ENCODE measurements at regions of chr12 and their contacts with region 1.

Region 1: DNA sequence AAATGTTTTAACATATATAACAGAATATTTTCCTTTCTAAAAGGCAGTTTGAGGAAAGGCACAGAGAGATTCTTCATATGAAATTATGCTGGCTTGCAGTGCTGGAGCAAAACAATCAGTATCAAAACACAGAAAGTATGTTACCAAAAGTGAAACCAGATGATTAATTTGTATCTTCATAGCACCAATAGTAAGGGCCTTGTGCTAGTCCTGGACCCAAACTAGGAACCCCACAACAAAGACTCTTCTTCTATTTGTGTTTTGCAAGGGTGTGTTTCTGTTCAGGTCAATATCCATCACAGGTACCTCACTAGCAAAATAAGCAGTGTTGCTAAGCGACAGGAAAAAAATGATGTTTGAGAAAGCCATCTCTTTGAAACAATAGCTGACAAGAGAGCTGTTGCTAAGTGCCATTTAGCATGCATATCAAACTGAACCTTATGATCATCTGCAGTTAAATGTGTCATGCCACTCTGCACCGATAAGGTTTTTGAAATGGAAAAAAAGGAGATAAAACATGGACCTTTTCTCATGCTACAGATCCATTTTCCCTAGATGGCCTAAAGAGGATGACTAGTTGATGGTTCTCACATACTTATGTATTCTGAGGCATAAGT is 196.2 kb upstream of the ALG10 start:
- DNase-seq: no peak
- ATAC-seq: no peak
- H3K4me3 ChIP-seq: no peak overlapping the region
- H3K4me3 Mint-ChIP-seq: no peak overlapping the region
- H3K27ac ChIP-seq: no peak overlapping the region
- H3K27ac Mint-ChIP-seq: no peak overlapping the region
- H3K4me1 ChIP-seq: no peaks in the 10 kb centered on the region
- H3K4me1 Mint-ChIP-seq: no peaks in the 10 kb centered on the region
- H3K27me3 ChIP-seq: no peaks in the 10 kb centered on the region
- H3K27me3 Mint-ChIP-seq: no peaks in the 10 kb centered on the region
- CTCF ChIP-seq: no peak

Region 2: DNA sequence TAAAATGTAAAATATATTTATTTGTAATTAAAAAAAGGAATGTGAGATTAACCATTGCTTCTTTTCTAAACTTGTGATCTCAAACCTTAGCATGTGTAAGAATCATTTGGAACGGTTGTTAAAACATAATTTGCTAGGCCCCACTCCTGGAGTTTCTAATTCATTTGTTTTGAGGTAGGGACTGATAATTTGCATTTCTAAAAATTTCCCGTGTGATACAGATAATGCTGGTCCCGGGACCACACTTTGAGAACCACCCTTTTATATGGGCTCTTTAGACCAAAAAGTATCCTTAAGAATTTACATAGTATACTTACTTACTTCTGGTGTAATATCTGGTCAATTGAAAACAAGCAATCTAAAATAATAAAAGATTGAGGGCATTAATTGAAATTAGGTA is 375.6 kb before region 1 on chr12:
- CTCF ChIA-PET with region 1: no interaction called
- POLR2A ChIA-PET with region 1: no interaction called
- intact Hi-C with region 1: no loop called
- DNase-seq: no peak
- ATAC-seq: no peak
- H3K4me3 ChIP-seq: no peak overlapping the region
- H3K4me3 Mint-ChIP-seq: no peak overlapping the region
- H3K27ac ChIP-seq: no peak overlapping the region
- H3K27ac Mint-ChIP-seq: no peak overlapping the region
- H3K4me1 ChIP-seq: no peaks in the 10 kb centered on the region
- H3K4me1 Mint-ChIP-seq: no peaks in the 10 kb centered on the region
- H3K27me3 ChIP-seq: no peaks in the 10 kb centered on the region
- H3K27me3 Mint-ChIP-seq: no peaks in the 10 kb centered on the region
- CTCF ChIP-seq: no peak

Region 3: DNA sequence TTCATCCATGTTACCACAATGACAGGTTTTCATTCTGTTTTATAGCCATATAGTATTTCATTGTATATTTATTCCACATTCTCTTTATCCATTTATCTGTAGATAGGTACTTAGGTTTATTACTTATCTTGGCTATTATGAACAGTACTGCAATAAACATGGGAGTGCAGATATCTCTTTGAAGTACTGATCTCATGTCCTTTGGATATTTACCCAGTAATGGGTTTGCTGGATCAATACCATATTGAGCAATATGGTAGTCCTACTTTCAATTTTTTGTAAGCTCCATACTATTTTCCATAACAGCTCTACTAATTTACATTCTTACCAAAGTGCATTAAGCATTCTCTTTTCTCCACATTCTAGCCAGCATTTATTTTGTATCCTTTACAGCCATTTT is 39.6 kb before region 1 on chr12:
- CTCF ChIA-PET with region 1: no interaction called
- POLR2A ChIA-PET with region 1: no interaction called
- intact Hi-C with region 1: loop called in 1 of 2 experiments (anchors 1 kb)
- DNase-seq: no peak
- ATAC-seq: no peak
- H3K4me3 ChIP-seq: no peak overlapping the region
- H3K4me3 Mint-ChIP-seq: no peak overlapping the region
- H3K27ac ChIP-seq: no peak overlapping the region
- H3K27ac Mint-ChIP-seq: no peak overlapping the region
- H3K4me1 ChIP-seq: no peaks in the 10 kb centered on the region
- H3K4me1 Mint-ChIP-seq: no peaks in the 10 kb centered on the region
- H3K27me3 ChIP-seq: no peaks in the 10 kb centered on the region
- H3K27me3 Mint-ChIP-seq: no peaks in the 10 kb centered on the region
- CTCF ChIP-seq: no peak

Region 4: GRCh38 chr12:33813536-33813935 is 12.6 kb before region 1 on chr12:
- CTCF ChIA-PET with region 1: no interaction called
- POLR2A ChIA-PET with region 1: no interaction called
- intact Hi-C with region 1: no loop called
- DNase-seq: no peak
- ATAC-seq: no peak
- H3K4me3 ChIP-seq: no peak overlapping the region
- H3K4me3 Mint-ChIP-seq: no peak overlapping the region
- H3K27ac ChIP-seq: no peak overlapping the region
- H3K27ac Mint-ChIP-seq: no peak overlapping the region
- H3K4me1 ChIP-seq: no peaks in the 10 kb centered on the region
- H3K4me1 Mint-ChIP-seq: no peaks in the 10 kb centered on the region
- H3K27me3 ChIP-seq: no peaks in the 10 kb centered on the region
- H3K27me3 Mint-ChIP-seq: no peaks in the 10 kb centered on the region
- CTCF ChIP-seq: no peak